ENCODE measurements at regions of chr1 and their contacts with region 1.

Region 1: GRCh38 chr1:246450611-246451251 is 56.3 kb downstream of the SMYD3 start:
- DNase-seq: no peak
- H3K4me3 ChIP-seq: no peak overlapping the region
- H3K27ac ChIP-seq: no peak overlapping the region
- H3K4me1 ChIP-seq: no peaks in the 10 kb centered on the region
- H3K27me3 ChIP-seq: no peaks in the 10 kb centered on the region
- CTCF ChIP-seq: peak; percentile 58

Region 2: DNA sequence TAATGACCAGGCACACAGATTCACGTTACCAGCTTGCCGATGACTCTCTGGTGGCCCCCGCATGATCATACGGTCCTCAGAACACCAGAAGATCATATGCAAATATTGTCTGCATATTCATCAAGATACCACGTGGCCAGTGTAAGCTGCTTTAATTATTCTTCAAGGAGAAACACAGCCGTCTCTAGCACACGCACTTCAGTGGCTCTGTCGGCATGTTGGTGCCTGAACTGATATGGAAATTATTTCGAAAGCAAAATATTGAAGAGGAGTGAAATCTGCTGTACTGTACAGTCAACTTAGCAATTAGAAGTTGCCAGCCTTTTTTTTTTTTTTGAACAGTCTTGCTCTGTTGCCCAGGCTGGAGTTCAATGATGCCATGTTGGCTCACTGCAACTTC is 1301.9 kb before region 1 on chr1:
- intact Hi-C with region 1: loop called (anchors 10 kb)
- DNase-seq: no peak
- H3K4me3 ChIP-seq: no peak overlapping the region
- H3K27ac ChIP-seq: no peak overlapping the region
- H3K4me1 ChIP-seq: peaks cover 4% of the 10 kb centered on the region
- H3K27me3 ChIP-seq: peaks cover 12% of the 10 kb centered on the region
- CTCF ChIP-seq: no peak

Region 3: GRCh38 chr1:246295968-246296367 is 154.8 kb before region 1 on chr1:
- intact Hi-C with region 1: no loop called
- DNase-seq: no peak
- H3K4me3 ChIP-seq: no peak overlapping the region
- H3K27ac ChIP-seq: no peak overlapping the region
- H3K4me1 ChIP-seq: no peaks in the 10 kb centered on the region
- H3K27me3 ChIP-seq: no peaks in the 10 kb centered on the region
- CTCF ChIP-seq: no peak